Natural killer cell (primary cell): ENCODE measurements at regions of chr11 and their contacts with region 1.

Region 1: GRCh38 chr11:13335319-13335718 is 57.7 kb downstream of the BMAL1 start:
- DNase-seq: peak; percentile 62 to 86
- ATAC-seq: peak; percentile 65 to 73 (median 72)
- H3K4me3 ChIP-seq: no peak overlapping the region
- H3K4me3 Mint-ChIP-seq: no peak overlapping the region
- H3K27ac ChIP-seq: no peak overlapping the region
- H3K27ac Mint-ChIP-seq: peak overlapping the region; percentile 79 to 86
- H3K4me1 ChIP-seq: peaks cover 50% of the 10 kb centered on the region
- H3K4me1 Mint-ChIP-seq: peaks cover 80 to 81% of the 10 kb centered on the region in 2 donors
- H3K27me3 ChIP-seq: no peaks in the 10 kb centered on the region
- H3K27me3 Mint-ChIP-seq: no peaks in the 10 kb centered on the region
- CTCF ChIP-seq: peak; percentile 95

Region 2: GRCh38 chr11:13023423-13023822 is 311.9 kb before region 1 on chr11:
- intact Hi-C with region 1: no loop called
- DNase-seq: no peak
- ATAC-seq: no peak
- H3K4me3 ChIP-seq: no peak overlapping the region
- H3K4me3 Mint-ChIP-seq: no peak overlapping the region
- H3K27ac ChIP-seq: no peak overlapping the region
- H3K27ac Mint-ChIP-seq: no peak overlapping the region
- H3K4me1 ChIP-seq: no peaks in the 10 kb centered on the region
- H3K4me1 Mint-ChIP-seq: no peaks in the 10 kb centered on the region
- H3K27me3 ChIP-seq: peaks cover 9% of the 10 kb centered on the region
- H3K27me3 Mint-ChIP-seq: peaks cover 22 to 55% of the 10 kb centered on the region in 2 donors
- CTCF ChIP-seq: no peak

Region 3: DNA sequence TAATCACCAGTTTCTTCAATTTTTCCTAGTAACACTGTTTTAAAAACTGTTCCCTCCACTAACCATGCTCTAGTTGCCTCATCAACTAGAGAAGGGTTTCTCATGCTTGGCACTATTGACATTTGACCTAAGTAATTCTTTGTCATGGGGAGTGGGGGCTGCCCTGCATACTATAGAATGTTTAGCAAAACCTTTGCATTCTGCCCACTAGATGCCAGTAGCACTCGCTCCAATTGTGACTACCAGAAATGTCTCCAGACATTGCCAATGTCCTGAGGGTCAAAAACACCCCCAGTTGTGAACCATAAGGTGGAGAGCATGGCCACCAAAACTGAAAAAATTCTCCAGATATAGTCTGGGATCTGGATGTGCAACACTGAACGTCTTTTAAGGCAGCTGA is 85.3 kb before region 1 on chr11:
- intact Hi-C with region 1: loop called (anchors 1 kb)
- DNase-seq: peak in 1 of 2 donors; percentile 38
- ATAC-seq: peak in 2 of 3 donors; percentile 47 to 55
- H3K4me3 ChIP-seq: no peak overlapping the region
- H3K4me3 Mint-ChIP-seq: no peak overlapping the region
- H3K27ac ChIP-seq: no peak overlapping the region
- H3K27ac Mint-ChIP-seq: no peak overlapping the region
- H3K4me1 ChIP-seq: no peaks in the 10 kb centered on the region
- H3K4me1 Mint-ChIP-seq: no peaks in the 10 kb centered on the region
- H3K27me3 ChIP-seq: peaks cover 4% of the 10 kb centered on the region
- H3K27me3 Mint-ChIP-seq: peaks cover 13 to 26% of the 10 kb centered on the region in 2 donors
- CTCF ChIP-seq: peak; percentile 27